ENCODE measurements at regions of chr3 and their contacts with region 1.

Region 1: GRCh38 chr3:128095222-128095703 is 28.3 kb downstream of the RUVBL1 start:
- DNase-seq: peak; percentile 86
- H3K4me3 Mint-ChIP-seq: no peak overlapping the region
- H3K27ac Mint-ChIP-seq: peak overlapping the region; percentile 64
- H3K4me1 Mint-ChIP-seq: peaks cover 27% of the 10 kb centered on the region
- H3K27me3 Mint-ChIP-seq: no peaks in the 10 kb centered on the region

Region 2: GRCh38 chr3:127884041-127884440 is 211.2 kb before region 1 on chr3:
- CTCF ChIA-PET with region 1: no interaction called
- POLR2A ChIA-PET with region 1: no interaction called
- DNase-seq: no peak
- H3K4me3 Mint-ChIP-seq: no peak overlapping the region
- H3K27ac Mint-ChIP-seq: no peak overlapping the region
- H3K4me1 Mint-ChIP-seq: peaks cover 3% of the 10 kb centered on the region
- H3K27me3 Mint-ChIP-seq: peaks cover 6% of the 10 kb centered on the region

Region 3: DNA sequence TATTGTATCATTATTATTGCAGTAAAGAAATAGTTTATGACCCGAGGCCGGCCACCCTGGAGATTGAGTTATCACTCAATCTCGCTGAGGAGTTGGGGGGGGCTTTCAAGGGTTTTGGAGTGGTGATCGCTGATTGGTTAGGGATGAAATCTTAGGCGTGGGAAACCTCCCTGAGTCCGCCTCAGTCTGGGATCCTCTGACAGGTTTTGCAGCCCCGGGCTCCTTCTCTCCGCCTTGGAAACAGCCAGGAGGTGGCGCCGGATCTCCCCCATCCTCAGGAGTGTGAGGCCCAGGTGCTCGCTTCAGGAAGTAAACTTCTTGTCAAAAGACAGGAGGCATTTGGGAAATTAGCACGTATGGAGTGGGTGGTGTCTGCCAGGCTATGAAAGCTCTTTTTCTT is 84.1 kb before region 1 on chr3:
- CTCF ChIA-PET with region 1: no interaction called
- POLR2A ChIA-PET with region 1: no interaction called
- DNase-seq: peak; percentile 20
- H3K4me3 Mint-ChIP-seq: no peak overlapping the region
- H3K27ac Mint-ChIP-seq: no peak overlapping the region
- H3K4me1 Mint-ChIP-seq: peaks cover 4% of the 10 kb centered on the region
- H3K27me3 Mint-ChIP-seq: no peaks in the 10 kb centered on the region

Region 4: DNA sequence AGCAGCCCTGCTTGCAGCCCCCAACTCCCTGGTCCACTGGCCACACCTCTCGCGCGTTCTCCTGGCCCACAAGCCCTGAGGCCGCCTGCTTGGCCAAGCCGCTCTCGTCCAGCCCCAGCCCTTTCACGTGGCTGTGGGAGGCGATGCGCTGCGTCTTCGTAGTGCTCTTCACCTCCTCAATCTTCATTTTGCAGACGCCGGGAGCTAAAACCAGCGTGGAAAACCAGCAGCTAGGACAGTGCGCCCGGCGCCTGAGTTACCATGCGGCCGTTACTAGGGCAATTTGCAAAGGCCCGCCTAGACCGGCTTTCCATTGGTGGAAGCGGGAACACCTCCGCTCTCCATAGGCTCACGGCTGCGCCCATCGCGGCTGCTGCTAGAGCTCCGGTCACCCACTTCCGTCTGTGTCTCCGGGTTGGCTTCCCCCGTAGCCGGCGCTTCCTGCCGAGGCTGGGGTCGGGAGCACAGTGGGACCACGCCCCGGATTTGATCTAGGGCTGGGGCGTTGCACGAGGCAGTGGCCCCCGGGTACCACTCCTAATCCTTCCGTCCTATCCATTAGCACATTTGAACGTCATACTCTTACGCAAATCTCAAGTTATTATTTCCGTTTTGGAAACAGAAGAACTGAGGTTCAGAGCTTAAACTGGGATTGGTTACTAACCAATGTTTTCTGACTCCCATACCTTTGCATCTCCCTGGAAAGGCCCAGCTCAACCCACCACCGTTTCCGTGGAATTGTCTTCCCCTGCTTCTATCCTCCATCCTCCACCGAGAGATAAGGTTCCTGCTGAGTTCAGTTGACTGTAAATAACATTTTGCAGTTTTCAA is 28.5 kb after region 1 on chr3 and contains the start of gene RUVBL1:
- CTCF ChIA-PET with region 1: interaction called, 30 read pairs
- POLR2A ChIA-PET with region 1: interaction called, 7 read pairs
- DNase-seq: peak; percentile 98
- H3K4me3 Mint-ChIP-seq: peak within 1 kb of the TSS; percentile 97
- H3K27ac Mint-ChIP-seq: peak within 1 kb of the TSS; percentile 86
- H3K4me1 Mint-ChIP-seq: peaks cover 31% of the 10 kb centered on the region
- H3K27me3 Mint-ChIP-seq: no peaks in the 10 kb centered on the region
- total RNA-seq, gene RUVBL1: 56.3 to 62.3 TPM

Region 5: GRCh38 chr3:128133273-128134084 is 38.2 kb after region 1 on chr3:
- CTCF ChIA-PET with region 1: interaction called, 144 read pairs
- POLR2A ChIA-PET with region 1: interaction called, 13 read pairs
- DNase-seq: peak; percentile 56
- H3K4me3 Mint-ChIP-seq: no peak overlapping the region
- H3K27ac Mint-ChIP-seq: no peak overlapping the region
- H3K4me1 Mint-ChIP-seq: no peaks in the 10 kb centered on the region
- H3K27me3 Mint-ChIP-seq: peaks cover 19% of the 10 kb centered on the region

Region 6: GRCh38 chr3:128322066-128323022 is 227.1 kb after region 1 on chr3:
- CTCF ChIA-PET with region 1: interaction called, 19 read pairs
- POLR2A ChIA-PET with region 1: no interaction called
- DNase-seq: peak; percentile 58
- H3K4me3 Mint-ChIP-seq: no peak overlapping the region
- H3K27ac Mint-ChIP-seq: no peak overlapping the region
- H3K4me1 Mint-ChIP-seq: peaks cover 17% of the 10 kb centered on the region
- H3K27me3 Mint-ChIP-seq: no peaks in the 10 kb centered on the region